CD4-positive, alpha-beta memory T cell (primary cell): ENCODE measurements at regions of chr22 and their contacts with region 1.

Region 1: DNA sequence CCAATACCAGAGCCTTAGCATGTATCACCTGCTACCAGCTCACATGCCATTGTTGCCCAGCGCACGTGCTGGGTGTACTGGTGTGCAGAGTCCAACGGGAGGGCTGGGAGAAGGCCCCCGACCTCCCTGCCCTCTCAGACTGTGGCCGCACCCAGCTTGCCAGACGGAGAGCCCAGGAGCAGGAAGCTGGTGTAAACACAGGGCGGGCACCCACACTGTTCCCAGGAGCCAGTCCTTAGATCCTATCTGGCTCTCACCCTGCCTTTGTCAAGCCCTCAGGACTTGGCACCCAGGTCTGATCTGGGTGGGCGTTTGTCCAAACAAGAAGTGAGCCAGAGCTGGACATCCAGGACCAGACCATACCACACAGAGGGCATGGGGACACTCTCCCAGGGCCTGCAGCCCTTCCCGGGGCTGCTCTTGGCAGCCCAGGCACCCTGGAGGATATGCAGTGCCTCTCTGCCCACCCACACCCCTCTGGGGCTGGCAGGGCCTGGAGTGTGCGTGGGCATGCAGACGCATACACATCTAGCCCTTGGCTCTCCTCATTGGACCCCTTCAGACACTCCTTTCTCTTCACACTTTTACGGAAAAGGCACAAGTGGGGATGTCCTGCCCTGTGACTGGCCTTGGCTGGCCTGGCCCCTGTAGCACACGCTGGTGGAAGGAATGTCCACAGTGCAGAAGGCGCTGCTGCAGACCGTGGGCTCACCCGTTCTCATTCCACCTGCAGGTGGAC is 19.9 kb upstream of the CLDN5 start:
- DNase-seq: no peak
- H3K4me3 ChIP-seq: no peak overlapping the region
- H3K4me3 Mint-ChIP-seq: no peak overlapping the region
- H3K27ac ChIP-seq: no peak overlapping the region
- H3K27ac Mint-ChIP-seq: peak overlapping the region in 1 of 7 donors; percentile 4
- H3K4me1 ChIP-seq: no peaks in the 10 kb centered on the region
- H3K4me1 Mint-ChIP-seq: no peaks in the 10 kb centered on the region
- H3K27me3 ChIP-seq: no peaks in the 10 kb centered on the region
- H3K27me3 Mint-ChIP-seq: peaks cover 1 to 3% of the 10 kb centered on the region in 2 donors

Region 2: GRCh38 chr22:19598054-19598855 is 54.1 kb after region 1 on chr22:
- CTCF ChIA-PET with region 1: interaction called, 4 read pairs
- POLR2A ChIA-PET with region 1: no interaction called
- intact Hi-C with region 1: loop called (anchors 10 kb)
- DNase-seq: peak in 3 of 5 donors; percentile 20 to 48 (median 23)
- H3K4me3 ChIP-seq: peak overlapping the region in 1 of 2 donors; percentile 22
- H3K4me3 Mint-ChIP-seq: peak overlapping the region in 7 of 8 donors; percentile 59 to 84 (median 77)
- H3K27ac ChIP-seq: peak overlapping the region; percentile 51
- H3K27ac Mint-ChIP-seq: peak overlapping the region; percentile 82 to 97 (median 94)
- H3K4me1 ChIP-seq: peaks cover 43% of the 10 kb centered on the region
- H3K4me1 Mint-ChIP-seq: peaks cover 31 to 58% (median 41%) of the 10 kb centered on the region in 4 donors
- H3K27me3 ChIP-seq: no peaks in the 10 kb centered on the region
- H3K27me3 Mint-ChIP-seq: no peaks in the 10 kb centered on the region

Region 3: DNA sequence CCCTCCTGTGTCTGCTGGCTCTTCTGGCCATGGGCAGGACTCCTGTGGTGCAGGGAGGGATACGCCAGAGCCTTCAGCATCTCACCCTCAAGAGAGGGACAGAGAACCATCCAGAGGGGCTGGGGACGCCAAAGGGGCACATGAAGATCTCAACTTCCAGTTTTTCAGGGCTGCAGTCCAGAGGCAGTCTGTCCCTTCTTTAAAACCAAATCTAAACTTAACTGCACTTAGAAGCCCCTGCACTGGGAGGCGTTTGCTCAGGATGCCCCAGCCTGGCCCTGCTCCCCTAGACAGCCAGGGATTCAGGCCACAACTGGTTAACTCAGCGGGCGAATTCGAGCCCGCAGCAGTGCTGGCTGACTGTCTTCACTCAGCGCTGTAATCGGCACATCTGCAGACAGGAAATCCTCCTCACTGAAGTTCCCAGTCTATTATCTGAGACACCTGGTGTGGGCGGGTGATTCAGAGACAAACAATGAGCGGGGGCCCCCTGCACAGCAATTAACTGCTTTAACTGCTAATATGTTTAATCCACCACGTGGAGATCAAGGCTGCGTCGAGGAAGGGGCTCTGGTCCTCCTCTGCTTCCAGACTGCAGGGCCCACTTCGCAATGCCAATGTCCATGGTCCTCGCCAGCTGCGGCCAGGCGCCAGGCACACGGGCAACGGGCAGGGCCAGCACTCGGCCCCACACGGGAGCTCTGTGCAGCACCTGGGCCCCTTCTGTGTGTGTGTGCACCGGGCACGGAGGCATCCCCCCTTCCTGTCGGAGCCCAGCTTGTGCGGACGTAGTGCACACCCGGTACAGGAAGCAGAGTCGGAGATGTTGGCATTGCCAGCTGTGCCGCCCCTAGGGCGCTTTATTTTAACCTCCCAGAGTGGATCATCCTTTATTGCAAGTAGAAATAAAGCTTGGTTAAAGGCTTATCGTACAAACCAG is 347.4 kb after region 1 on chr22:
- CTCF ChIA-PET with region 1: no interaction called
- POLR2A ChIA-PET with region 1: no interaction called
- intact Hi-C with region 1: no loop called
- DNase-seq: peak; percentile 76 to 94 (median 80)
- H3K4me3 ChIP-seq: peak overlapping the region; percentile 8 to 46
- H3K4me3 Mint-ChIP-seq: peak overlapping the region; percentile 79 to 93 (median 86)
- H3K27ac ChIP-seq: peak overlapping the region; percentile 59
- H3K27ac Mint-ChIP-seq: peak overlapping the region; percentile 74 to 99 (median 96)
- H3K4me1 ChIP-seq: peaks cover 75% of the 10 kb centered on the region
- H3K4me1 Mint-ChIP-seq: peaks cover 33 to 85% (median 52%) of the 10 kb centered on the region in 4 donors
- H3K27me3 ChIP-seq: no peaks in the 10 kb centered on the region
- H3K27me3 Mint-ChIP-seq: no peaks in the 10 kb centered on the region